ENCODE measurements at regions of chr18 and their contacts with region 1.

Region 1: GRCh38 chr18:51110073-51110803 is 80.2 kb downstream of the SMAD4 start:
- DNase-seq: peak; percentile 61
- ATAC-seq: peak; percentile 92 to 95

Region 2: DNA sequence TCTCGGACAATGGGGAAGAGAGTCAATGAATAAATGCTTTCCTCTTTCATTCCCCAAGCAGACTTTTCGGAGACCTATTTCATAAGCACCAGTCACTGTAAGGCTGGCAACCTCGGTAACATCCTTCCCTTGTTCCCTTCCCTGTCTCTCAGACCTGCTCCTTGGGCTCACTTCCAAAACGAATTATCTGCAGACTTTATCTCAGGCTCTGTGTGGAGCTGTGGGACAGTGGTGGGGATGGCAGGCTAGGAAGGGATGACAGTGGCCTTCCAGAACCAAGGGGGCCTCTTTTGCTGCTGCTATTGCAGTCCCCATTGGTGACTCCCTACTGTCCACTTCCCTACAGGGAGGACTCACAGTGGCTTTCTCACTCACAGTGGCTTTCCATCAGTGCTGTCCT is 272.9 kb after region 1 on chr18:
- intact Hi-C with region 1: loop called in 1 of 2 experiments (anchors 10 kb)
- DNase-seq: no peak
- ATAC-seq: no peak

Region 3: DNA sequence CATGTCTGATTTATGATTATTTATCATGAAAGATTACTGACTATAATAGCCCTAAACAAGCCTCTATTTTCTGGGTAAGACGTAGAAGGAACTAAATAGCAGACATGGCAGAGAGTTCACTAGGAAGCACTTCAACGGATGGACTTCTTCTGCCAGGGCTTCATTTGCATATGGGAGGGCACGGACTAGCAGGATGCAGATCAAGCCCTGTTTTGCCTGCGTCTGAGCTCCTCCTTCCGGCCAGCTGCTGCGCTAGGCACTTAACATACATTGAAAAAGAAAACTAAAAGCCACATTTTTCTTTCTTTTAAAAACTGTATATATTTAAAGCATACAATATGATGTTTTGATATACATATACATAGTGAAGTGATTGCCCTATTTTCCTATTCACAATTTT is 427.2 kb after region 1 on chr18:
- intact Hi-C with region 1: loop called in 1 of 2 experiments (anchors 5 kb)
- DNase-seq: peak; percentile 24
- ATAC-seq: peak; percentile 76 to 82

Region 4: DNA sequence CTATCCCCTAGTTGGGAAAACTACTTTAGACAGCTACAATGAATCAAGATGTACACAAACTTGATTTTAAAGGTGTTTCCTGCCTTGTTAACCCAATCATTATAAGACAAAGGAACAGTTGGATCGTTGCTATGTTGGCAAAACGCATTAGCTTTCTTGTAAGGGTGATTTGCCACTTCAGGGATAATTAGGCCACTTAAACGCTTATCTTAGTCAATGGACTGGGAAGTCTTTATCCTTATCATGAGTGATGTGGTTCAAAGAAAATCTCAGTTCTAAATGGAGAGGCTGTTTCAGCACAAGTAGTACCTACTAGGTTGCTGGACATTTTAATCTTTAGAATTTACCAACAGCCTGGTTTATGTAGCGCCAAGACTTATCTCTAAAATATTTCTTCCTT is 493.3 kb after region 1 on chr18:
- intact Hi-C with region 1: loop called in 1 of 2 experiments (anchors 10 kb)
- DNase-seq: no peak
- ATAC-seq: no peak